H1 (cell line): ENCODE measurements at regions of chr4 and their contacts with region 1.

Region 1: DNA sequence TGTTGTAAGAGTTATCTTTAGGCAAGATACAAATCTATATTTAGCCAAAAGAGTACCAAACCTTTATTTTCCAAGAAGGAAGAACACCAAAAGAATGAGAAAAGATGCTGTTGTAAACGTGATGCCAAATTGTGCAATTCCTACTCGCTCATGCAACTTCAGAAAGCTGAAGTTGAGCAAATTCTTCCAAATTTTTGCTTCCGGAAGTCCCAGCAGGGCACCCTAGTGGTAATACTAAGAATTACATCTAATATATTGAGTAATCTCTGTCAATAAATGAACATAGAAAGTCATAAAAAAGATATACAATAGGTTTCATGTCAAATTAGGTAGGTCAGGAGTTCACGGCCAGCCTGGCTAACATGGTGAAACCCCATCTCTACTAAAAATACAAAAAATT is 36.0 kb upstream of the SMARCAD1 start:
- DNase-seq: no peak
- H3K4me3 ChIP-seq: no peak overlapping the region
- H3K27ac ChIP-seq: no peak overlapping the region
- H3K4me1 ChIP-seq: no peaks in the 10 kb centered on the region
- H3K27me3 ChIP-seq: no peaks in the 10 kb centered on the region
- CTCF ChIP-seq: peak in 1 of 3 experiments; percentile 45; a peak in 2 of 4 replicates
- EP300 ChIP-seq: no peak
- POLR2A ChIP-seq: no peak
- RAD21 ChIP-seq: peak; percentile 11 to 14; a peak in 2 of 4 replicates

Region 2: DNA sequence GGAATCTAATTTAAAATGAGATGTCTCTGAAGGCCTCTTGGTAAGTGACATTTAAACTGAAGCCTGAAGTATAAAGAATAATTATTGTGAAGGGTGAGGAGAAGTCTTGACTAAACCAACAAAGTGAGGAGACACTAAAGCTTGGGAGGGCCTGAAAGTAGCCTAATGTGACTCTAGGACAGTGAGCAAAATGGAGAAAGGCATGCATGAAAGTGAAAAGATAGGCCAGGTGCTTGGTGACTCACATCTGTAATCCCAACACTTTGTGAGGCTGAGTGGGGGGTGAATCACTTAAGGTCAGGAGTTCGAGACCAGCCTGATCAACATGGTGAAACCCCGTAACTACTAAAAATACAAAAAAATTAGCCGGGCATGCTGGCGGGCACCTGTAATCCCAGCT is 10.8 kb before region 1 on chr4:
- CTCF ChIA-PET with region 1: interaction called, 14 read pairs
- POLR2A ChIA-PET with region 1: no interaction called
- DNase-seq: no peak
- H3K4me3 ChIP-seq: no peak overlapping the region
- H3K27ac ChIP-seq: no peak overlapping the region
- H3K4me1 ChIP-seq: no peaks in the 10 kb centered on the region; a peak in 1 of 7 replicates
- H3K27me3 ChIP-seq: no peaks in the 10 kb centered on the region
- CTCF ChIP-seq: no peak
- EP300 ChIP-seq: no peak
- POLR2A ChIP-seq: no peak
- RAD21 ChIP-seq: no peak